ENCODE measurements at regions of chr1 and their contacts with region 1.

Region 1: DNA sequence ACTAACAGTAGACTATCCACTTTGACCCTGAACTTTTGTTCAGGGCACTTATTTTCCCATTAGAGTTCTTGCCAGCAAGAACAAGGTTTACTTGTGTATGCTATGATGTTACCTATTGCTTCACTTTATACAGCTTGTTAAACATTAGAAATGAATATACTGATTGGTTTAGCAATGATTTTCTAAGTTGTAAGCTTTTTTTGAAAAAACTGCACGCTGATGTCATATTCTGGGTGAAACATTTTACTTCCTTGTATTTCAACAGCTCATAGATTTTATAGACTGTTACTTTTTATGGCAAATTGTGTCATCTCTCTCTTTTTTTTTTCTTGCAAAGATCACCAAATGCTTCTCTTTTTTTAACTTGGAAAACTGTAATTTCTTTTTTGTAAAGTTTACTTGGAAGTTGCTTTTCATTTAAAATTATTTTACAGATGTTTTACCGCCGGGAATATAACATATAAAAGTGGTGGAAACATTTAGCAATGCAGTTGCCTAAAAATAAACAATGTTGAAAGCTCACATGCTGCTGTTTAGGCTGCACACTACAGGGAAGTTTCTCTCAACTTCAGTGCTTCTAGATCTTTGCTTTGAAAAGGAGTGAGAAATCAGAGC is 215.3 kb upstream of the NFIA start:
- DNase-seq: no peak
- ATAC-seq: peak in 1 of 4 donors; percentile 50
- H3K4me3 ChIP-seq: peak overlapping the region in 4 of 12 donors; percentile 6 to 39 (median 36)
- H3K27ac ChIP-seq: peak overlapping the region in 3 of 12 donors; percentile 4 to 54 (median 43)
- H3K4me1 ChIP-seq: peaks cover 0 to 18% (median 9%) of the 10 kb centered on the region in 12 donors
- H3K27me3 ChIP-seq: no peaks in the 10 kb centered on the region
- CTCF ChIP-seq: no peak
- POLR2A ChIP-seq: no peak

Region 2: DNA sequence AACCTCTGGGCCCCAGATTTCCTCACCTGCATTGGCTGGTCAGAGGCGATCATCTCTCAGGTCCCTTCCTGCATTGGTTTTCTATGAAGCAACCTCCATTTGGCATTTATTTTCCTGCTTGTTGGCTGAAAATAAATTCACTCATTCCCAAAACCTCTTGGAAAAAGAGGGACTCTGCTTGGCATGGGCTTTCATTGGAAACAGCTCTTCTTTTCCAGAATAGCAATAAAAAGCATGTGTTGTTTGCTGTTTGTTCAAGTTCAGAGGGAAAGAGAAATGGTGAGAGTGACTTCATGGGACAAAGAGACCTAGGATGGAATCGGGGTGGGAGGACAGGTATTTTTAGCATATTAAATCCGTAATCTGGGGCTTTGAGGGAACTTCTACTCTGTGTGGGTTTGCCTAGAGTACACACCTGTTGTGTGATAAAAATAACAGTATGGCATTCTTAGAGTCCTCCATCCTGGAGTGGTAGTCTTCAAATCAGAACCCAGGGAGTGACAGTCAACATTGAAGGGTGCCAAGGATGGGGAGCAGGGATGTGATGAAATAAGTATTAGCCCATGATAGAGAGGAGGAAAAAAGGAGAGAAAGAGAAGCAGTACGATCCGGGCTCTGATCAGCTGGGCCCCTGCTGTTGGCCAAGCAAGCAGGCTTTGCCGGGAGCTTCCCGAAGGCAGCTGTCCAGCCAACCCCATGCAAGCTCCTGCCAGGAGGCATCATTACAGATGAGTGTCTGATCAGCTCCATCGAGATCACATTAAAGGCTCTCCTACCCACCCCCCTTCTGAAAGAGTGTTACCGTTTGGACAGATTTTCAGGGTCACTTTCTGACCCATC is 83.4 kb after region 1 on chr1:
- intact Hi-C with region 1: loop called in 1 of 10 experiments (anchors 10 kb)
- DNase-seq: no peak
- ATAC-seq: peak in 1 of 4 donors; percentile 34
- H3K4me3 ChIP-seq: no peak overlapping the region
- H3K27ac ChIP-seq: no peak overlapping the region
- H3K4me1 ChIP-seq: peaks cover 0 to 28% (median 3%) of the 10 kb centered on the region in 12 donors
- H3K27me3 ChIP-seq: no peaks in the 10 kb centered on the region
- CTCF ChIP-seq: no peak
- POLR2A ChIP-seq: no peak

Region 3: GRCh38 chr1:61092642-61093041 is 225.6 kb after region 1 on chr1:
- intact Hi-C with region 1: no loop called
- DNase-seq: no peak
- ATAC-seq: peak in 1 of 4 donors; percentile 32
- H3K4me3 ChIP-seq: peak overlapping the region in 3 of 12 donors; percentile 0 to 12 (median 0)
- H3K27ac ChIP-seq: peak overlapping the region in 5 of 12 donors; percentile 39 to 67 (median 47)
- H3K4me1 ChIP-seq: peaks cover 9 to 92% (median 67%) of the 10 kb centered on the region in 12 donors
- H3K27me3 ChIP-seq: no peaks in the 10 kb centered on the region
- CTCF ChIP-seq: no peak
- POLR2A ChIP-seq: no peak

Measured in heart left ventricle (tissue), 16 donors.